ENCODE measurements at regions of chrX and their contacts with region 1.

Region 1: GRCh38 chrX:108439434-108439883 is at the start of gene COL4A5:
- DNase-seq: peak; percentile 91
- H3K4me3 ChIP-seq: peak within 1 kb of the TSS; percentile 56 to 65 (median 59)
- H3K27ac ChIP-seq: peak within 1 kb of the TSS; percentile 64 to 83 (median 80)
- H3K4me1 ChIP-seq: peaks cover 0 to under 1% (median 0%) of the 10 kb centered on the region in 4 donors
- H3K27me3 ChIP-seq: no peaks in the 10 kb centered on the region
- CTCF ChIP-seq: no peak
- EP300 ChIP-seq: no peak
- POLR2A ChIP-seq: no peak
- total RNA-seq, gene COL4A5: 187 to 241 (median 204) TPM

Region 2: GRCh38 chrX:108224727-108225621 is 214.5 kb before region 1 on chrX:
- intact Hi-C with region 1: loop called (anchors 5 kb)
- DNase-seq: no peak
- H3K4me3 ChIP-seq: no peak overlapping the region
- H3K27ac ChIP-seq: peak overlapping the region; percentile 68 to 76 (median 75)
- H3K4me1 ChIP-seq: peaks cover 0 to 60% (median 47%) of the 10 kb centered on the region in 4 donors
- H3K27me3 ChIP-seq: no peaks in the 10 kb centered on the region
- CTCF ChIP-seq: peak; percentile 54 to 58 (median 55)
- EP300 ChIP-seq: no peak
- POLR2A ChIP-seq: no peak

Region 3: GRCh38 chrX:108304210-108304609 is 135.2 kb before region 1 on chrX:
- intact Hi-C with region 1: loop called (anchors 10 kb)
- DNase-seq: no peak
- H3K4me3 ChIP-seq: no peak overlapping the region
- H3K27ac ChIP-seq: peak overlapping the region; percentile 59 to 69 (median 64)
- H3K4me1 ChIP-seq: peaks cover under 1 to 75% (median 31%) of the 10 kb centered on the region in 4 donors
- H3K27me3 ChIP-seq: no peaks in the 10 kb centered on the region
- CTCF ChIP-seq: peak; percentile 38 to 42 (median 41)
- EP300 ChIP-seq: no peak
- POLR2A ChIP-seq: no peak

Region 4: DNA sequence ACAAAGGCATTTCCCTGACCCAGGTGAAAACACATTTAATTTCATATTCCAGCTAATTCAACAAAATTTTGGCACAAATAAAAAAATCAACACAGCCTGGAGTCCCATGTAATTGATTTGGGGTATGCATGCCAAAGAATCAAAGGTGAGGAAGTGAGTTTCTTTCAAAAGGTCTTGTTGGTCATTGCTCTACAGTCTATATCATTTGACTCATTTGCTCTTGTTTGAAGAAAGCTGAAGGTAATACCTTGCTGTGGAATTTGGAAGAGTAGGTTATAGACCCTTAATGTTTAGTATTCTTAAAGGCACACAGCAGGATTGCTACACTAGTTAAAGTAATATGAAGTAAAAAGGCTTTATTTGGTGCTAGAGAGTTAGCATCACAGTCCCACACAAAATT is 26.7 kb before region 1 on chrX:
- intact Hi-C with region 1: no loop called
- DNase-seq: no peak
- H3K4me3 ChIP-seq: no peak overlapping the region
- H3K27ac ChIP-seq: no peak overlapping the region
- H3K4me1 ChIP-seq: peaks cover 0 to 41% (median 14%) of the 10 kb centered on the region in 4 donors
- H3K27me3 ChIP-seq: no peaks in the 10 kb centered on the region
- CTCF ChIP-seq: no peak
- EP300 ChIP-seq: no peak
- POLR2A ChIP-seq: no peak

Region 5: DNA sequence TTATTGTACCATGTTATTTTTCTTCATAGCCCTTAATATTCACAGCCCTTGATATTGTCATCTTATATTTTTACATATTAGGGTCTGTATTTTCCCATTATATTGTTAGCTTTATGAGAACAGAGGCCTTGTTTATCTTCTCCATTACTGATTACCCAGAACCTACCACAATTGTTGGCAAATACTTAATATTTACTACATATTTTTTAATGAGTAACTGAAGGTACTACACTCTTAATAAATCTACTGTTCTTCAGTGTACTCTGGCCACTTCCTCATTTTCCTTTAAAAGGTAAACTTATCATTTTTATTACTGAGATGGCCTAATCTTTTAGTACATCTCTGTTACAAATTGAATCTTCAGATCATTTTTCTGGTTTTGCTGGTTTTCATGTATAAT is 133.7 kb after region 1 on chrX:
- intact Hi-C with region 1: no loop called
- DNase-seq: no peak
- H3K4me3 ChIP-seq: no peak overlapping the region
- H3K27ac ChIP-seq: no peak overlapping the region
- H3K4me1 ChIP-seq: no peaks in the 10 kb centered on the region
- H3K27me3 ChIP-seq: no peaks in the 10 kb centered on the region
- CTCF ChIP-seq: no peak
- EP300 ChIP-seq: no peak
- POLR2A ChIP-seq: no peak

Region 6: DNA sequence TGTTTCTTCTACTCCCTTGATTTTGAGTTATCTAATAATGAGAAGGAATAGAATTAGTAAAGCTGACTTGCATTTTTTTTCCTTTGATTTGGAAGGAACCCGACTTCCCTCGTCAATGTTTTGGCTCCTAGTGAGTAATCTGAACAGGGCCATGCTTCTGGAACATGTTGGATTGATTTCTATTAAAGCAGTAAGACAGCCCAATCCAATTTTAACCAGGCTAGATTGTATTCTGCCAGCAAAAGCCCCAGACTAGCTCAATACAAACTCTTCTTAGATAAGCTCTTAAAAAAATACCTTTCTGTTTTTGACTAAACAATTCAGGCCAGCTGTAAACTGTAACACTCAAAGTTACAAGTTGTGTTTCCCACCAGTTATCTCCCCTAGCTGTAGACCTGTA is 170.7 kb after region 1 on chrX:
- intact Hi-C with region 1: no loop called
- DNase-seq: no peak
- H3K4me3 ChIP-seq: no peak overlapping the region
- H3K27ac ChIP-seq: no peak overlapping the region
- H3K4me1 ChIP-seq: no peaks in the 10 kb centered on the region
- H3K27me3 ChIP-seq: peaks cover 0 to 3% (median 0%) of the 10 kb centered on the region in 4 donors
- CTCF ChIP-seq: no peak
- EP300 ChIP-seq: no peak
- POLR2A ChIP-seq: no peak

Measured in esophagus muscularis mucosa (tissue), 4 donors.